ENCODE measurements at regions of chr5 and their contacts with region 1.

Region 1: DNA sequence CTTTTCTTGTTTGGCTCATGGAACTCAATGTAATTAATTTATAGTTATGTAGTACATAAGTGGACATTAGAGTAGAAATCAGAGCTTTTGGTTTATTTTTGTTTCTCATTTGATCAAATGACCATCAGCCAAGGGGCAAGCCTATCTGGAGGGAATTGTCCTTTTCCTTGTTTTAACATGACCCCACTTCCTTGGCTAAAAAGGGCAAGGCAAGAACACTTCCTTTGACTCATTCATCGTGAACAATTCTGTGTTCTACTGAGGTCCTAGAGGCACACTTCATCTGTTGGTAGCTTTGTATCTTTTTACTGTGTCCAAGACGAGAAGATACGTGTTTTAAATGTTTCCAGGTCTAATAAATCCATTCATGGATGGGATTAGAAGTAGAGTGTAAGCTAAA is 148.9 kb downstream of the ARHGEF28 start:
- DNase-seq: peak; percentile 87
- H3K4me3 ChIP-seq: no peak overlapping the region
- H3K27ac ChIP-seq: no peak overlapping the region
- H3K4me1 ChIP-seq: peaks cover 19% of the 10 kb centered on the region
- H3K27me3 ChIP-seq: no peaks in the 10 kb centered on the region
- CTCF ChIP-seq: no peak
- POLR2A ChIP-seq: peak; percentile 76

Region 2: GRCh38 chr5:73673161-73673591 is 101.7 kb before region 1 on chr5:
- CTCF ChIA-PET with region 1: interaction called, 11 read pairs
- POLR2A ChIA-PET with region 1: no interaction called
- dilution Hi-C with region 1: no loop called
- intact Hi-C with region 1: no loop called
- DNase-seq: peak; percentile 91
- H3K4me3 ChIP-seq: no peak overlapping the region
- H3K27ac ChIP-seq: peak overlapping the region; percentile 74
- H3K4me1 ChIP-seq: peaks cover 33% of the 10 kb centered on the region
- H3K27me3 ChIP-seq: no peaks in the 10 kb centered on the region
- CTCF ChIP-seq: peak in 1 of 2 donors; percentile 6
- POLR2A ChIP-seq: no peak

Measured in endothelial cell of umbilical vein (primary cell).